ENCODE measurements at regions of chr12 and their contacts with region 1.

Region 1: GRCh38 chr12:12813120-12814101 is at the start of gene DDX47:
- DNase-seq: peak; percentile 97
- H3K4me3 ChIP-seq: peak within 1 kb of the TSS; percentile 67 to 83 (median 77)
- H3K27ac ChIP-seq: peak within 1 kb of the TSS; percentile 66 to 83 (median 80)
- H3K4me1 ChIP-seq: peaks cover 0 to 39% (median 33%) of the 10 kb centered on the region in 4 donors
- H3K27me3 ChIP-seq: no peaks in the 10 kb centered on the region
- CTCF ChIP-seq: peak; percentile 93 to 97 (median 95)
- EP300 ChIP-seq: no peak
- POLR2A ChIP-seq: peak; percentile 23 to 24
- total RNA-seq, gene DDX47: 42.9 to 56.9 (median 49.7) TPM

Region 2: GRCh38 chr12:12890815-12891645 is 77.6 kb after region 1 on chr12 and contains the start of gene GPRC5A:
- intact Hi-C with region 1: loop called (anchors 10 kb)
- DNase-seq: peak; percentile 95
- H3K4me3 ChIP-seq: peak within 1 kb of the TSS; percentile 39 to 57 (median 56)
- H3K27ac ChIP-seq: peak within 1 kb of the TSS; percentile 54 to 80 (median 64)
- H3K4me1 ChIP-seq: peaks cover 0 to 18% (median 10%) of the 10 kb centered on the region in 4 donors
- H3K27me3 ChIP-seq: peaks cover 0 to 7% (median 0%) of the 10 kb centered on the region in 3 donors
- CTCF ChIP-seq: no peak
- EP300 ChIP-seq: no peak
- POLR2A ChIP-seq: peak in 1 of 2 donors; percentile 78
- total RNA-seq, gene GPRC5A: 2.1 to 11.4 (median 2.8) TPM

Region 3: GRCh38 chr12:12999959-13000615 is 186.7 kb after region 1 on chr12 and contains the start of gene HEBP1:
- intact Hi-C with region 1: loop called (anchors 10 kb)
- DNase-seq: peak; percentile 97
- H3K4me3 ChIP-seq: peak within 1 kb of the TSS; percentile 62 to 83 (median 78)
- H3K27ac ChIP-seq: peak within 1 kb of the TSS; percentile 83 to 98 (median 90)
- H3K4me1 ChIP-seq: peaks cover 0 to 39% (median 18%) of the 10 kb centered on the region in 4 donors
- H3K27me3 ChIP-seq: no peaks in the 10 kb centered on the region
- CTCF ChIP-seq: no peak
- EP300 ChIP-seq: no peak
- POLR2A ChIP-seq: peak; percentile 75 to 78
- total RNA-seq, gene HEBP1: 32.1 to 54.8 (median 38.2) TPM